T-cell (primary cell): ENCODE measurements at regions of chr1 and their contacts with region 1.

Region 1: DNA sequence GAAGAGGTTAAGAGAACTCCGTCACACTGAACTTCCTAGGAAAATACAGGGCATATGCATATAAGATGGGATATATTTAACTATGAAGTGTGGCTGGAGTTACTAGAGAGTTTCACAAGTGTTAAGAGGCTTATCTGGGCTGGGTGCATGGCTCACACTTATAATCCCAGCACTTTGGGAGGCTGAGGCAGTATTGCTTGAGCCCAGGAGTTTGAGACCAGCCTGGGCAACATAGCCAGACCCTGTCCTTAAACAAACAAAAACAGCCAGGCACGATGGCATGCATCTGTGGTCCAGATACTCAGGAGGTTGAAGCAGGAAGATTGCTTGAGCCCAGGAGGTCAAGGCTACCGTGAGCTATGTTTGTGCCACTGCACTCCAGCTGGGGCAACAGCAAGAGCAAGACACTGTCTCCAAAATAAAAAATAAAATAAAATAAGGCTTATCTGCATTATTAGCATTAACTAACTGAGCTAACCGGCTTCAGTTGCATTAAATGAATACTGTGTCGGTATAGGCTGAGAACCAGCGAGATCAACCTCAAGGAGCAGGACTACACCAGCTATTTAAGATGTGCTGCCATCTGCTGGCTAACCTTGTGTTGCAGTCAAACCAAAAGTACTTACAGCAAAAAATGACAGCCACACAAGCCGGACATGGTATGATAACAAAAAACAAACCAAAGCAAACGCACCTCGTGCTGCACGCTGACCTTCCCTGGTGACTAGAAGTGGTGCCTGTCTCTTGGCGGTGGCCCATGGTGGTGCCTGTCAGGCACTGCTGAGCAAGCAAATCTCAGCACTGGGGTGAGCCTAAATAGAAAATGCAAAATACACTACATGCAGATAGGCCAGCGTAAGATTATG is 19.7 kb upstream of the RBBP5 start:
- DNase-seq: peak; percentile 35 to 86 (median 67)
- ATAC-seq: peak; percentile 85 to 91 (median 90)
- H3K4me3 ChIP-seq: no peak overlapping the region
- H3K4me3 Mint-ChIP-seq: no peak overlapping the region
- H3K27ac ChIP-seq: no peak overlapping the region
- H3K27ac Mint-ChIP-seq: no peak overlapping the region
- H3K4me1 ChIP-seq: peaks cover 0 to 9% of the 10 kb centered on the region in 2 experiments
- H3K4me1 Mint-ChIP-seq: peaks cover 6 to 12% (median 10%) of the 10 kb centered on the region in 3 donors
- H3K27me3 ChIP-seq: no peaks in the 10 kb centered on the region
- H3K27me3 Mint-ChIP-seq: no peaks in the 10 kb centered on the region

Region 2: DNA sequence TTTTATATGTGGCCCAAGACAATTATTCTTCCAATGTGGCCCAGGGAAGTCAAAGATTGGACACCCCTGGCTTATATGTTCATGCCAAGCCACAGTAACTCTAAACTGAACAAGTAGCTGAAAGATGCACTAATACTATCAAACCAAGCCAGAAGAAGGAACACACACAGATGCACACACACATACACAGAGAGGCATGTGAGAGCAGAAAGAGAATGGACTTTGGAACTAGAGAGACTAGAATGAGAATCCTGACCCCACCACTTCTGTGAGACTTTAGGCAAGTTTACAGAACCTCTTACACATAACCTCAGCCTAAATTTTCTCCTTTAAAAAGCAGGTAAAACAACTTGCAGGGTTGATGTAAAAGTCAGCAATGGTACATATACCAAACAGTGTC is 46.0 kb before region 1 on chr1:
- CTCF ChIA-PET with region 1: no interaction called
- POLR2A ChIA-PET with region 1: no interaction called
- DNase-seq: no peak
- ATAC-seq: no peak
- H3K4me3 ChIP-seq: no peak overlapping the region
- H3K4me3 Mint-ChIP-seq: no peak overlapping the region
- H3K27ac ChIP-seq: no peak overlapping the region
- H3K27ac Mint-ChIP-seq: no peak overlapping the region
- H3K4me1 ChIP-seq: no peaks in the 10 kb centered on the region
- H3K4me1 Mint-ChIP-seq: no peaks in the 10 kb centered on the region
- H3K27me3 ChIP-seq: no peaks in the 10 kb centered on the region
- H3K27me3 Mint-ChIP-seq: no peaks in the 10 kb centered on the region

Region 3: GRCh38 chr1:205121660-205122488 is 19.6 kb before region 1 on chr1 and contains the start of gene RBBP5:
- CTCF ChIA-PET with region 1: interaction called, 5 to 11 read pairs
- POLR2A ChIA-PET with region 1: interaction called in 1 of 2 experiments, 4 read pairs
- DNase-seq: peak; percentile 88 to 98 (median 94)
- ATAC-seq: peak; percentile 93 to 98 (median 98)
- H3K4me3 ChIP-seq: peak within 1 kb of the TSS; percentile 88 to 92
- H3K4me3 Mint-ChIP-seq: peak within 1 kb of the TSS; percentile 97 to 99 (median 98)
- H3K27ac ChIP-seq: peak within 1 kb of the TSS; percentile 99
- H3K27ac Mint-ChIP-seq: peak within 1 kb of the TSS; percentile 99 to 100
- H3K4me1 ChIP-seq: peaks cover 16 to 17% of the 10 kb centered on the region in 2 experiments
- H3K4me1 Mint-ChIP-seq: peaks cover 50 to 55% (median 52%) of the 10 kb centered on the region in 3 donors
- H3K27me3 ChIP-seq: no peaks in the 10 kb centered on the region
- H3K27me3 Mint-ChIP-seq: no peaks in the 10 kb centered on the region
- total RNA-seq, gene RBBP5: 13.9 to 24.3 (median 22.3) TPM